ENCODE measurements at regions of chr7 and their contacts with region 1.

Region 1: DNA sequence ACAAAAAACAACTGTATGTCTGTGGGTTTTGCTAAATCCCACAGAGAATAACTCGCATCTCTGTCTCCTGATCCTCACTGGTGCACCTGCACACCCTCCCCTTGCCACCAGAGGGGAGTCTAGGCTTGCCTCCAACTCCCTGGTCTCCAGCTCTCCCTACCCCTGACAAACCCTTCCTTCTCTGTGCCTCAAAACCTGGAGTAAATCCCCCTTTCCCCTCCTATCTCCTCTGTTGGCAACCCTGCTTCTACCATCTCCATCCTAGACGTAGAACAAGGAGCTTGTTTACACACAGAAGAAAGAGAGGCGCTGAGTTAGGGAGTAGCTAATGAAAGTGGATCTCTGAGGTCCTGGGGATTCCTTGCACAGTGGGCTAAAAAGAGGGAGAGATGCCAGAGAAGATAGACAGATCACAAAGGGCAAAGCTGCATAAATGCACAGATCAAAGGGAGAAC is 6.0 kb downstream of the MBLAC1 start:
- DNase-seq: peak; percentile 48 to 83 (median 62)
- ATAC-seq: peak; percentile 77
- H3K4me3 ChIP-seq: no peak overlapping the region
- H3K4me3 Mint-ChIP-seq: peak overlapping the region; percentile 62
- H3K27ac ChIP-seq: no peak overlapping the region
- H3K27ac Mint-ChIP-seq: peak overlapping the region; percentile 42
- H3K4me1 ChIP-seq: peaks cover 23% of the 10 kb centered on the region
- H3K4me1 Mint-ChIP-seq: peaks cover 15% of the 10 kb centered on the region
- H3K27me3 ChIP-seq: no peaks in the 10 kb centered on the region
- H3K27me3 Mint-ChIP-seq: no peaks in the 10 kb centered on the region
- CTCF ChIP-seq: peak; percentile 82

Region 2: DNA sequence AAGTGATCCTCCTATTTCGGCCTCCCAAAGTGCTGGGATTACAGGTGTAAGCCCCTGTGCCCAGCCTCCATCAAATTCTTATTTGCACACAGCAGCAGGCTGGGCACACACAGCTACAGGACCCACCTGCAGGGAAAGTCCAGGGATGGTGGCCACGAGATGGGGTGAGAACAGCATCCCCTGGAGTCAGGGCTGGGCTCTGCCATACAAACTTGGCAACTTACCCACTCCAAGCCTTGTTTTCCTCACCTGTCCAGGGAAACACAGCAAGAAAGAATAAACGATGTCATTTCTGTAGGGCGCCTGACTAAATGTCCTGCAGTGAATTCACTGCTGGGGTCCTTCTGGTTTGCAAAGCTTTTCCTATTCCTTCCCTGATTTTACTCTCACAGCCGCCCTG is 854.5 kb before region 1 on chr7:
- CTCF ChIA-PET with region 1: no interaction called
- POLR2A ChIA-PET with region 1: no interaction called
- intact Hi-C with region 1: no loop called
- DNase-seq: no peak
- ATAC-seq: no peak
- H3K4me3 ChIP-seq: no peak overlapping the region
- H3K4me3 Mint-ChIP-seq: no peak overlapping the region
- H3K27ac ChIP-seq: no peak overlapping the region
- H3K27ac Mint-ChIP-seq: no peak overlapping the region
- H3K4me1 ChIP-seq: peaks cover 5% of the 10 kb centered on the region
- H3K4me1 Mint-ChIP-seq: no peaks in the 10 kb centered on the region
- H3K27me3 ChIP-seq: no peaks in the 10 kb centered on the region
- H3K27me3 Mint-ChIP-seq: no peaks in the 10 kb centered on the region
- CTCF ChIP-seq: no peak

Region 3: GRCh38 chr7:99975782-99976521 is 156.8 kb before region 1 on chr7 and contains the start of gene AZGP1:
- CTCF ChIA-PET with region 1: interaction called, 3 read pairs
- POLR2A ChIA-PET with region 1: no interaction called
- intact Hi-C with region 1: loop called (anchors 1 to 5 kb)
- DNase-seq: no peak
- ATAC-seq: no peak
- H3K4me3 ChIP-seq: no peak within 1 kb of the TSS
- H3K4me3 Mint-ChIP-seq: no peak within 1 kb of the TSS
- H3K27ac ChIP-seq: no peak within 1 kb of the TSS
- H3K27ac Mint-ChIP-seq: no peak within 1 kb of the TSS
- H3K4me1 ChIP-seq: peaks cover 6% of the 10 kb centered on the region
- H3K4me1 Mint-ChIP-seq: peaks cover 9% of the 10 kb centered on the region
- H3K27me3 ChIP-seq: peaks cover 4 to 6% of the 10 kb centered on the region in 2 experiments
- H3K27me3 Mint-ChIP-seq: peaks cover 23% of the 10 kb centered on the region
- CTCF ChIP-seq: no peak
- total RNA-seq, gene AZGP1: not detected

Region 4: GRCh38 chr7:100101016-100101862 is 31.5 kb before region 1 on chr7 and contains the starts of genes AP4M1 and MCM7:
- CTCF ChIA-PET with region 1: interaction called, 7 read pairs
- POLR2A ChIA-PET with region 1: interaction called, 13 read pairs
- intact Hi-C with region 1: loop called (anchors 1 to 2 kb)
- DNase-seq: peak; percentile 87 to 98 (median 93)
- ATAC-seq: peak; percentile 85
- H3K4me3 ChIP-seq: peak within 1 kb of the TSS; percentile 97
- H3K4me3 Mint-ChIP-seq: peak within 1 kb of the TSS; percentile 98
- H3K27ac ChIP-seq: peak within 1 kb of the TSS; percentile 90 to 95
- H3K27ac Mint-ChIP-seq: peak within 1 kb of the TSS; percentile 98
- H3K4me1 ChIP-seq: peaks cover 38% of the 10 kb centered on the region
- H3K4me1 Mint-ChIP-seq: peaks cover 47% of the 10 kb centered on the region
- H3K27me3 ChIP-seq: no peaks in the 10 kb centered on the region
- H3K27me3 Mint-ChIP-seq: no peaks in the 10 kb centered on the region
- CTCF ChIP-seq: no peak
- total RNA-seq, gene AP4M1: 2.8 to 4.0 TPM
- total RNA-seq, gene MCM7: 54.5 to 56.0 TPM

Region 5: DNA sequence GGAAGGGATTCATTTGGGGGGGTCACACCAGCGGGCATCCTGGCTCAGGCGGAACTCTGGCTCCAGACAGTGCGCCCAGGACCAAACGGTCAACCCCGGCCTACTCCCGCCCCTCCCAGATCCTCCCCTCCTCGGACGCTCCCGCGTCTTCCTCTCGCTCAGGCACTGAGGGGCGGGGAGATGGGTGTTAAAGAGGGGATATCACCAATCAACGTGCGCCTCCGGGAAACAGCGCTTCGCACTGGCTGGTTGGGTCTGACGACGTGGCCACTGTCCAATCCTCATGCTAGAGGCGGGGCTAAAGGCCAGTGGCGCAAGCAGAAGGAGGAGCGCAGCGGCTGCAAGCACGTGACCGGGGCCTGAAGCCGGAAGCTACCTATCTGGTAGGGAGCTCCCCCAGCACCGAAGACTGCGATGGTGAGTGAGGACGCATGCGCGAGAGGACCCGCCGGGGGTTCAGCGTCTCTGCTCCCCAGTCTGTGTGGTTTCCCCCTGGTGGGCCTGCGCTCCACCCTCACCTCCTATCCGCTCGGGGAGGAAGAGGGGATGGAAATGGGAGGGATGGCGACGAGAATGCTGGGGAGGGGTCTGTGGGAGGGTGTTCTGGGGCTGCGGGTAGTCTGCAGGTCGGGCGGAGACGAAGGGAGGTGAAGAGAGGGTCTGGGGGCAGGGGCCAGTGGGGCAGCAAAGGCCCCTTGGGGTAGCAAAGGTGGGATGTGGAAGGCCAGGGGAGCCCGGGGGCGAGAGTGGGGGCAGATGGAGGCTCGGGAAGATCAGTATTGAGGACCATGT is 16.0 kb after region 1 on chr7 and contains the start of gene LAMTOR4:
- CTCF ChIA-PET with region 1: interaction called, 9 read pairs
- POLR2A ChIA-PET with region 1: interaction called, 12 read pairs
- intact Hi-C with region 1: loop called in 1 of 2 experiments (anchors 2 kb)
- DNase-seq: peak; percentile 94 to 100 (median 97)
- ATAC-seq: peak; percentile 95
- H3K4me3 ChIP-seq: peak within 1 kb of the TSS; percentile 99
- H3K4me3 Mint-ChIP-seq: peak within 1 kb of the TSS; percentile 92
- H3K27ac ChIP-seq: peak within 1 kb of the TSS; percentile 93 to 94
- H3K27ac Mint-ChIP-seq: peak within 1 kb of the TSS; percentile 95
- H3K4me1 ChIP-seq: peaks cover 41% of the 10 kb centered on the region
- H3K4me1 Mint-ChIP-seq: peaks cover 38% of the 10 kb centered on the region
- H3K27me3 ChIP-seq: no peaks in the 10 kb centered on the region
- H3K27me3 Mint-ChIP-seq: no peaks in the 10 kb centered on the region
- CTCF ChIP-seq: peak; percentile 9
- total RNA-seq, gene LAMTOR4: 107 to 125 TPM

Region 6: DNA sequence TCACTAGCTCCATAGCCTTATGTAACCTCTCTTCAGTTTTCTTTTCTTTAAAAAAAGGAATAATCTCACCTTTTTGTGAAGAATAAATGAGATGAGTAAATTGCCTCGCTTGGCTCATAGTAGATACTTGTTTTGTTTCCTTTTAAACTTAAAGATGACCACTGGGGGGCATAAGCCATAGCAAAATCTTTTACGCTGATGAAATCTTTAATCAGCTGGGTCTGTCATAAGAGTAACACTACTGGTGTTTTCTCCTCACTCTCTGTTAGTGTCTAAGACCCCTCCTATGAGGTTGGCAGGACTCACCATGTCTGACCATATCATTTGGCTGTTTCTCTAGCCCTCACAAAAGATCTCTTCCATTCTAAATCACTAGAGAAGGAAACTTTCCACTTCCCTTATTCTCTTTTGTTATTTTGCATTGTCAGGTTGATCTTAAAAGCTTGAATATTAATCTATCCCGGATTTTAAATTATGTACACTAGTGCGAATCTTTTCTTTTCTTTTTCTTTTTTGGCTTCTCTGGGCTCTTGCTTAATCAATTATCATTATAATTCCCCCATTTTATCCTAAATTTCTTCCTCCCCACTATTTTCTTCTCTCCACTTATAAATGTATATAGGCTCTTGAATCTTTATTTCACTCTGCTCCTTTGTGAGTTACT is 57.5 kb after region 1 on chr7:
- CTCF ChIA-PET with region 1: interaction called, 11 read pairs
- POLR2A ChIA-PET with region 1: no interaction called
- intact Hi-C with region 1: no loop called
- DNase-seq: peak in 3 of 14 experiments; percentile 72 to 77 (median 73)
- ATAC-seq: peak; percentile 84
- H3K4me3 ChIP-seq: no peak overlapping the region
- H3K4me3 Mint-ChIP-seq: no peak overlapping the region
- H3K27ac ChIP-seq: no peak overlapping the region
- H3K27ac Mint-ChIP-seq: peak overlapping the region; percentile 25
- H3K4me1 ChIP-seq: peaks cover 1% of the 10 kb centered on the region
- H3K4me1 Mint-ChIP-seq: peaks cover 44% of the 10 kb centered on the region
- H3K27me3 ChIP-seq: no peaks in the 10 kb centered on the region
- H3K27me3 Mint-ChIP-seq: no peaks in the 10 kb centered on the region
- CTCF ChIP-seq: peak; percentile 55

Region 7: DNA sequence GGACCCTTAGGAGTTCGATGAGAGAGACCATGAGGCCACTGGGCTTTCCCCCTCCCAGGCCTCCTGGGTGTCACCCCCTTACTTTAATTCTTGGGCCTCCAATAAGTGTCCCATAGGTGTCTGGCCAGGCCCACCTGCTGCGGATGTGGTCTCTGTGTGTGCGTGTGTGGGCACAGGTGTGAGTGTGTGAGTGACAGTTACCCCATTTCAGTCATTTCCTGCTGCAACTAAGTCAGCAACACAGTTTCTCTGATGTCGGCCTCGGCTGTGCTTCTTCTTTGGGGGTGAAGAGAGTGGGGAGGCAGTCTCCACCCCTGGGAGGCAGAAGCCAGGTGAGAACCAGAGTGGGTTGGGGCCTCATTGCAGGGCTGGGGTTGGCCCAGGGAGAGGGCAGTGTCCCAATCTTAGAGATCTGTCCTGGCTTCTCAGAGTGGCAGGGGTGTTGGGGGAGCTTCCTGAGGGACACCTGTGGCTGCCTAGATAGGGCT is 88.6 kb after region 1 on chr7:
- CTCF ChIA-PET with region 1: interaction called, 10 read pairs
- POLR2A ChIA-PET with region 1: interaction called, 6 read pairs
- intact Hi-C with region 1: loop called (anchors 1 kb)
- DNase-seq: peak; percentile 62 to 95 (median 78)
- ATAC-seq: peak; percentile 69
- H3K4me3 ChIP-seq: peak overlapping the region; percentile 89
- H3K4me3 Mint-ChIP-seq: peak overlapping the region; percentile 95
- H3K27ac ChIP-seq: peak overlapping the region; percentile 98 to 99
- H3K27ac Mint-ChIP-seq: peak overlapping the region; percentile 98
- H3K4me1 ChIP-seq: peaks cover 85% of the 10 kb centered on the region
- H3K4me1 Mint-ChIP-seq: peaks cover 72% of the 10 kb centered on the region
- H3K27me3 ChIP-seq: no peaks in the 10 kb centered on the region
- H3K27me3 Mint-ChIP-seq: no peaks in the 10 kb centered on the region
- CTCF ChIP-seq: no peak

Region 8: GRCh38 chr7:100407285-100408180 is 274.8 kb after region 1 on chr7:
- CTCF ChIA-PET with region 1: interaction called, 6 read pairs
- POLR2A ChIA-PET with region 1: interaction called, 3 read pairs
- intact Hi-C with region 1: loop called (anchors 1 to 2 kb)
- DNase-seq: peak in 9 of 14 experiments; percentile 11 to 81 (median 31)
- ATAC-seq: peak; percentile 93
- H3K4me3 ChIP-seq: no peak overlapping the region
- H3K4me3 Mint-ChIP-seq: no peak overlapping the region
- H3K27ac ChIP-seq: no peak overlapping the region
- H3K27ac Mint-ChIP-seq: no peak overlapping the region
- H3K4me1 ChIP-seq: peaks cover 5% of the 10 kb centered on the region
- H3K4me1 Mint-ChIP-seq: peaks cover 3% of the 10 kb centered on the region
- H3K27me3 ChIP-seq: no peaks in the 10 kb centered on the region
- H3K27me3 Mint-ChIP-seq: no peaks in the 10 kb centered on the region
- CTCF ChIP-seq: peak; percentile 67

Region 9: DNA sequence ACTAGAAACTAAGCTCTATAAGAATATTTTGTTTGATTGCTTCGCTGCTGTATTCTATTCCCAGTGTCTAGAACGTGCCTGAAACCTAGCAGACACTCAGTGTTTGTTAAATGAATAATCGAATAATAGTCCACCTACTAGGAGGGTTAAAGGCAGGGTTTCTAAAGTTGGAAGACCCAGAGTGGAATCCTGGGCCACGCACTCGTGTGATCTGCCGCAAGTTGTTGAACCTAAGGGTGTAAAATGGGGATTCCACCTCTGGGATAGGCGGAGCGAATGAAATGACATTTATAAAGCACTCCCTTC is 405.6 kb after region 1 on chr7:
- CTCF ChIA-PET with region 1: no interaction called
- POLR2A ChIA-PET with region 1: no interaction called
- intact Hi-C with region 1: no loop called
- DNase-seq: no peak
- ATAC-seq: no peak
- H3K4me3 ChIP-seq: peak overlapping the region; percentile 38
- H3K4me3 Mint-ChIP-seq: peak overlapping the region; percentile 99
- H3K27ac ChIP-seq: peak overlapping the region in 1 of 2 donors; percentile 41
- H3K27ac Mint-ChIP-seq: peak overlapping the region; percentile 77
- H3K4me1 ChIP-seq: peaks cover 40% of the 10 kb centered on the region
- H3K4me1 Mint-ChIP-seq: peaks cover 43% of the 10 kb centered on the region
- H3K27me3 ChIP-seq: no peaks in the 10 kb centered on the region
- H3K27me3 Mint-ChIP-seq: no peaks in the 10 kb centered on the region
- CTCF ChIP-seq: no peak